ENCODE measurements at regions of chr1 and their contacts with region 1.

Region 1: GRCh38 chr1:216742625-216743024 is 19.4 kb upstream of the ESRRG start:
- ATAC-seq: no peak
- H3K4me3 ChIP-seq: no peak overlapping the region
- H3K27ac ChIP-seq: no peak overlapping the region
- H3K4me1 ChIP-seq: peaks cover 12 to 21% of the 10 kb centered on the region in 2 donors

Region 2: GRCh38 chr1:216937491-216937890 is 194.9 kb after region 1 on chr1:
- in situ Hi-C with region 1: no loop called
- ATAC-seq: peak in 1 of 8 experiments; percentile 29
- H3K4me3 ChIP-seq: no peak overlapping the region
- H3K27ac ChIP-seq: no peak overlapping the region
- H3K4me1 ChIP-seq: peaks cover 0 to 5% of the 10 kb centered on the region in 2 donors

Region 3: GRCh38 chr1:218171285-218171893 is 1428.8 kb after region 1 on chr1:
- in situ Hi-C with region 1: loop called in 1 of 9 experiments (anchors 25 kb)
- ATAC-seq: peak in 4 of 8 experiments; percentile 40 to 52 (median 43)
- H3K4me3 ChIP-seq: no peak overlapping the region
- H3K27ac ChIP-seq: no peak overlapping the region
- H3K4me1 ChIP-seq: peaks cover 2 to 30% of the 10 kb centered on the region in 2 donors